Activated naive CD4-positive, alpha-beta T cell treated with anti-CD3 and anti-CD28 coated beads for 36 hours (primary cell): ENCODE measurements at regions of chr2 and their contacts with region 1.

Region 1: DNA sequence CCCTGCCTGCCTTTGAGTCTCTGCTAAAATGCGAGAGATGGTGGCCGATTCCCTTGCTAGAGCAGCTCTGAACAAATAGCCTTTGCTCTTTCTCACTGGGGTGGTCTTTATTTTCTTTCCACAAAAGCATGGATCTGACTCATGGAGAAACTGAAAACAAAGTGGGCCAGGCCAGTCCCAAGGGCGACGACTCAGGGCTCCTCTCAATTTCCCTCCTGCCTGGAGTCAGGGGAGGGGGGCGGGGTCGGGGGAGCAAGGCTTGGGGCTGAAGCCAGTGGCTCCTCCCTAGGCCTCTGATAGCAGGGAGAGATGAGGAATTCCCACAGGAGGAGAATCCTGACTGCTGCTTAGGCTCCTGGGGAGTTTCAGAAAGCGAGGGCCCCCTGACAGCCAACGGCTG is 17.1 kb upstream of the IL1R2 start:
- DNase-seq: no peak
- H3K4me3 Mint-ChIP-seq: no peak overlapping the region
- H3K27ac Mint-ChIP-seq: no peak overlapping the region
- H3K4me1 Mint-ChIP-seq: peaks cover 6% of the 10 kb centered on the region
- H3K27me3 Mint-ChIP-seq: no peaks in the 10 kb centered on the region

Region 2: GRCh38 chr2:101675512-101675911 is 299.2 kb before region 1 on chr2:
- CTCF ChIA-PET with region 1: no interaction called
- intact Hi-C with region 1: no loop called
- DNase-seq: peak; percentile 21
- H3K4me3 Mint-ChIP-seq: no peak overlapping the region
- H3K27ac Mint-ChIP-seq: peak overlapping the region; percentile 3
- H3K4me1 Mint-ChIP-seq: peaks cover 23% of the 10 kb centered on the region
- H3K27me3 Mint-ChIP-seq: no peaks in the 10 kb centered on the region

Region 3: GRCh38 chr2:101751875-101752619 is 222.6 kb before region 1 on chr2:
- CTCF ChIA-PET with region 1: no interaction called
- intact Hi-C with region 1: no loop called
- DNase-seq: no peak
- H3K4me3 Mint-ChIP-seq: no peak overlapping the region
- H3K27ac Mint-ChIP-seq: no peak overlapping the region
- H3K4me1 Mint-ChIP-seq: peaks cover 74% of the 10 kb centered on the region
- H3K27me3 Mint-ChIP-seq: no peaks in the 10 kb centered on the region

Region 4: DNA sequence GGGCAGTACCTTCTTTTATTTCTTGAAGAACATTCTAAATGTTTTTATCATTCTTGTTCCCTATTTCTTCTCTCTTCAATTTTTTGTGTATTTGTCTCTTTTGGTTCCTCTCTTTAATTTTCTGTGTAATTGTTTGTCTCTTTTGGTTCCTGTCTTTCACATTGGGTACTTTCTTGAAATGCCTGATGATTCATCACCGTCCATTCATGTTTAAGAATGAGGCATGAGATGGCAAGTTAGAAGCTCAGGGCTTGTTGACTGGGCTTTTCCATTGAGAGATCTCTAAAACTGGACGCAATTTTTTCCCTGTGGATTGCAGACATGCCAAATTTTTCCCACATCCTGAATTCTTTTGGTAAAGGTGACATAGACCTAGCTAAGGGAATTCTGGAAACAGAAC is 16.6 kb before region 1 on chr2:
- CTCF ChIA-PET with region 1: no interaction called
- intact Hi-C with region 1: loop called (anchors 1 kb)
- DNase-seq: no peak
- H3K4me3 Mint-ChIP-seq: no peak overlapping the region
- H3K27ac Mint-ChIP-seq: no peak overlapping the region
- H3K4me1 Mint-ChIP-seq: peaks cover 3% of the 10 kb centered on the region
- H3K27me3 Mint-ChIP-seq: no peaks in the 10 kb centered on the region